Gastrocnemius medialis (tissue), 4 donors: ENCODE measurements at regions of chr22 and their contacts with region 1.

Region 1: GRCh38 chr22:36221799-36222751 is 17.3 kb downstream of the APOL2 start:
- DNase-seq: peak in 1 of 2 donors; percentile 40
- ATAC-seq: no peak
- H3K4me3 ChIP-seq: no peak overlapping the region
- H3K27ac ChIP-seq: no peak overlapping the region
- H3K4me1 ChIP-seq: peaks cover 12 to 15% of the 10 kb centered on the region in 2 donors
- H3K27me3 ChIP-seq: no peaks in the 10 kb centered on the region
- CTCF ChIP-seq: peak; percentile 27 to 69 (median 56)
- POLR2A ChIP-seq: no peak

Region 2: DNA sequence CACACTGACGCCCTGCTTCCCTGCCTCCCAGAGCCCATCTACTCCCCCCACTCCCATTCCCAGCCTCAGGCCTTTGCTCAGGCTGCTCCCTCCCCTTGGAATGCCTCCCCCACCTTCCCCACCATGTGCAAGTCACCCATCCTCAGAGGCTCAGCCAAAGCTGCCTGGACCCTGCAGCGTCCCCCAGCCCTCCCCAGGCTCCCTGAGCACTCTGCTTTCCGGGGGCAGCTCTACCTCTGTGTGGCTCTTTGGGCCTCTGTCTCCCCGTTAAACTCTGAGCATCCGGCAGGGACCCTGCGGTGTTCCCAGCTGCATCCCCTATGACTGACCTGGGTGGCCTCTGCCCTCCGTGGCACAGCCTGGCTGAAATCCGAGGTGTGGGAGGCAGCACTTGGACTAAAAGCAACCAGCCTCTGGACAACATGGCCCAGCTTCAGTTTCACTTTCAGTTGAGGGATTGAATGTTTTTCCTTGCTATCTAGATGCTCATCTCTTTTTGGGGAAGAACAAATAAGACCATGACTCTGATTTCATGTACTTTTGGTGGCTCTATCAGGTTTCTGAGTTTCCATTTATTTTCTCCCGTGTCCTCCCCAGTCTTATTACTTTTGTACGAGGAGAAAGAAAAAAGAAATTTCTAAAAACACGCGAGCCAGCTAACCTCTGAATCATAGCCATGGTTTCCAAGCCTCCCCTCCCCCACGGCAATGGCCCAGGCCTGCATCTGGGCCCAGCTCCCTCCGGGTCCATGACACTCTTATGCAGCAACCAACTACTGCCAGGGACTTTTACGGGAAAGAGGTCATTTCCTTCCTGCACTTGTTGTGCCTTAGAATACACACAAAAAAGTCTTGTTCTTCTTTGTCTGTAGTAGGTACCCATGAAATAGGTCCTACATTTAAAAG is 65.3 kb before region 1 on chr22:
- in situ Hi-C with region 1: no loop called
- intact Hi-C with region 1: no loop called
- DNase-seq: peak; percentile 63 to 79
- ATAC-seq: peak; percentile 75 to 76
- H3K4me3 ChIP-seq: peak overlapping the region; percentile 47 to 61 (median 54)
- H3K27ac ChIP-seq: peak overlapping the region; percentile 74 to 84 (median 81)
- H3K4me1 ChIP-seq: peaks cover 39 to 55% of the 10 kb centered on the region in 2 donors
- H3K27me3 ChIP-seq: no peaks in the 10 kb centered on the region
- CTCF ChIP-seq: no peak
- POLR2A ChIP-seq: peak; percentile 48 to 73

Region 3: DNA sequence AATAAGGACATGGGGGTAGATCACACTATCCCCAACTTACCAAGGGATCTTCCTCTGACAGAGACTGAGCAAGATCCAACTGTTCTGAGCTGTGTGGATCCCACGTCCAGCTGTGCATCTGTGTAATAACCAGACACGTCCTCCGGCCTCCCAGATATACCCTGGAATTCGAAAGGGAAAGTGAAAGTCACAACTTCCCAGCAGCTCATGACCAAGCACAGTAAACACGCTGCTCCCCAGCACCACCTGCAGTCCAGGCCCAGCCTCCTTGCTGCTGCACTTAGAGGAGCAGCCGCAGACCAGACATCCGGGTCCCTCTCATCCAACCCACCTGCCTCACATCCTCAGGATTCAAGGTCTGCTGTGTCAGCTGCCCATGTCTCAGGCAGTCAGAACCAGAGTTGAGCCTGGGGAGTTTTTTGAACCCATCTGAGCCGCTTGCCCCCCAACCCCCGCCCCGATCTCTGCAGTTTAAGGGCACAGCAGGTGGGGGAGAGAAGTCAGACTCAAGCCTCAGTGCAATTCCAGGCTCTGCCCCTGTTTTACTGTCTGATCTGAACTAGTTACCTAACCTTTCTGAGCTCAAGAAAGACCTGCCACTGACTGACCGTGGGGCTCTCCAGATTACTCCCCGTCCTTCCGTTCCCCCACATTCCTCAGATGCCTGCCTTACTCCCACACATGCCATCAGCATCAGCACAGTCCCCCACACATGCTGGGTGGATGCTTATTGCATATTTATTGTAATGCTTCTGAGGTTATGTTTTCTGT is 17.5 kb after region 1 on chr22 and contains the start of gene APOL2:
- in situ Hi-C with region 1: no loop called
- intact Hi-C with region 1: loop called (anchors 1 kb)
- DNase-seq: peak; percentile 87 to 93
- ATAC-seq: peak; percentile 97 to 98
- H3K4me3 ChIP-seq: peak within 1 kb of the TSS; percentile 64 to 87 (median 76)
- H3K27ac ChIP-seq: peak within 1 kb of the TSS; percentile 88 to 97 (median 93)
- H3K4me1 ChIP-seq: peaks cover 36 to 48% of the 10 kb centered on the region in 2 donors
- H3K27me3 ChIP-seq: no peaks in the 10 kb centered on the region
- CTCF ChIP-seq: peak; percentile 49 to 82 (median 71)
- POLR2A ChIP-seq: peak; percentile 74 to 83
- total RNA-seq, gene APOL2: 8.7 to 25.5 (median 20.9) TPM